ENCODE measurements at regions of chr11 and their contacts with region 1.

Region 1: GRCh38 chr11:108008656-108009496 is at the start of gene CUL5:
- DNase-seq: peak; percentile 83 to 95 (median 89)
- ATAC-seq: peak; percentile 88
- H3K4me3 ChIP-seq: peak within 1 kb of the TSS; percentile 99
- H3K4me3 Mint-ChIP-seq: no peak within 1 kb of the TSS
- H3K27ac ChIP-seq: peak within 1 kb of the TSS; percentile 97 to 98
- H3K27ac Mint-ChIP-seq: peak within 1 kb of the TSS; percentile 98
- H3K4me1 ChIP-seq: peaks cover 24% of the 10 kb centered on the region
- H3K4me1 Mint-ChIP-seq: peaks cover 3% of the 10 kb centered on the region
- H3K27me3 ChIP-seq: no peaks in the 10 kb centered on the region
- H3K27me3 Mint-ChIP-seq: no peaks in the 10 kb centered on the region
- CTCF ChIP-seq: peak; percentile 70
- total RNA-seq, gene CUL5: 73.3 to 75.0 TPM

Region 2: GRCh38 chr11:106082096-106082495 is 1926.8 kb before region 1 on chr11:
- CTCF ChIA-PET with region 1: no interaction called
- POLR2A ChIA-PET with region 1: no interaction called
- intact Hi-C with region 1: loop called in 1 of 2 experiments (anchors 5 kb)
- DNase-seq: no peak
- ATAC-seq: no peak
- H3K4me3 ChIP-seq: no peak overlapping the region
- H3K4me3 Mint-ChIP-seq: peak overlapping the region; percentile 16
- H3K27ac ChIP-seq: no peak overlapping the region
- H3K27ac Mint-ChIP-seq: peak overlapping the region; percentile 7
- H3K4me1 ChIP-seq: peaks cover 57% of the 10 kb centered on the region
- H3K4me1 Mint-ChIP-seq: peaks cover 77% of the 10 kb centered on the region
- H3K27me3 ChIP-seq: no peaks in the 10 kb centered on the region
- H3K27me3 Mint-ChIP-seq: no peaks in the 10 kb centered on the region
- CTCF ChIP-seq: no peak

Region 3: GRCh38 chr11:107457558-107458271 is 551.2 kb before region 1 on chr11 and contains the start of gene CWF19L2:
- CTCF ChIA-PET with region 1: interaction called, 3 read pairs
- POLR2A ChIA-PET with region 1: interaction called, 4 read pairs
- intact Hi-C with region 1: loop called (anchors 5 kb)
- DNase-seq: peak; percentile 80 to 96 (median 88)
- ATAC-seq: peak; percentile 96
- H3K4me3 ChIP-seq: peak within 1 kb of the TSS; percentile 70 to 82
- H3K4me3 Mint-ChIP-seq: peak within 1 kb of the TSS; percentile 92
- H3K27ac ChIP-seq: peak within 1 kb of the TSS; percentile 73 to 81
- H3K27ac Mint-ChIP-seq: peak within 1 kb of the TSS; percentile 94
- H3K4me1 ChIP-seq: peaks cover 7% of the 10 kb centered on the region
- H3K4me1 Mint-ChIP-seq: peaks cover 32% of the 10 kb centered on the region
- H3K27me3 ChIP-seq: no peaks in the 10 kb centered on the region
- H3K27me3 Mint-ChIP-seq: peaks cover 2% of the 10 kb centered on the region
- CTCF ChIP-seq: no peak
- total RNA-seq, gene CWF19L2: 24.3 to 25.2 TPM

Region 4: GRCh38 chr11:107956543-107956942 is 52.3 kb before region 1 on chr11:
- CTCF ChIA-PET with region 1: no interaction called
- POLR2A ChIA-PET with region 1: no interaction called
- intact Hi-C with region 1: no loop called
- DNase-seq: no peak
- ATAC-seq: no peak
- H3K4me3 ChIP-seq: no peak overlapping the region
- H3K4me3 Mint-ChIP-seq: no peak overlapping the region
- H3K27ac ChIP-seq: no peak overlapping the region
- H3K27ac Mint-ChIP-seq: no peak overlapping the region
- H3K4me1 ChIP-seq: no peaks in the 10 kb centered on the region
- H3K4me1 Mint-ChIP-seq: no peaks in the 10 kb centered on the region
- H3K27me3 ChIP-seq: no peaks in the 10 kb centered on the region
- H3K27me3 Mint-ChIP-seq: peaks cover 13% of the 10 kb centered on the region
- CTCF ChIP-seq: no peak

Region 5: GRCh38 chr11:108121274-108122155 is 112.6 kb after region 1 on chr11 and contains the start of gene ACAT1:
- CTCF ChIA-PET with region 1: no interaction called
- POLR2A ChIA-PET with region 1: no interaction called
- intact Hi-C with region 1: loop called (anchors 1 to 5 kb)
- DNase-seq: peak; percentile 89 to 98 (median 97)
- ATAC-seq: peak; percentile 98
- H3K4me3 ChIP-seq: peak within 1 kb of the TSS; percentile 82 to 89
- H3K4me3 Mint-ChIP-seq: peak within 1 kb of the TSS; percentile 88
- H3K27ac ChIP-seq: peak within 1 kb of the TSS; percentile 59 to 70
- H3K27ac Mint-ChIP-seq: peak within 1 kb of the TSS; percentile 78
- H3K4me1 ChIP-seq: peaks cover 31% of the 10 kb centered on the region
- H3K4me1 Mint-ChIP-seq: peaks cover 43% of the 10 kb centered on the region
- H3K27me3 ChIP-seq: no peaks in the 10 kb centered on the region
- H3K27me3 Mint-ChIP-seq: no peaks in the 10 kb centered on the region
- CTCF ChIP-seq: no peak
- total RNA-seq, gene ACAT1: 14.2 to 15.0 TPM

Region 6: GRCh38 chr11:108593214-108593922 is 584.5 kb after region 1 on chr11 and contains the start of gene EXPH5:
- CTCF ChIA-PET with region 1: no interaction called
- POLR2A ChIA-PET with region 1: interaction called, 4 read pairs
- intact Hi-C with region 1: loop called in 1 of 2 experiments (anchors 2 kb)
- DNase-seq: peak; percentile 65 to 91 (median 85)
- ATAC-seq: peak; percentile 94
- H3K4me3 ChIP-seq: peak within 1 kb of the TSS; percentile 63 to 66
- H3K4me3 Mint-ChIP-seq: peak within 1 kb of the TSS; percentile 95
- H3K27ac ChIP-seq: peak within 1 kb of the TSS; percentile 22 to 69
- H3K27ac Mint-ChIP-seq: peak within 1 kb of the TSS; percentile 90
- H3K4me1 ChIP-seq: peaks cover 14% of the 10 kb centered on the region
- H3K4me1 Mint-ChIP-seq: peaks cover 16% of the 10 kb centered on the region
- H3K27me3 ChIP-seq: peaks cover 0 to 4% of the 10 kb centered on the region in 2 experiments
- H3K27me3 Mint-ChIP-seq: peaks cover 13% of the 10 kb centered on the region
- CTCF ChIP-seq: no peak
- total RNA-seq, gene EXPH5: 1.5 to 1.7 TPM

Measured in CD8-positive, alpha-beta T cell (primary cell).